ENCODE measurements at regions of chr18 and their contacts with region 1.

Region 1: DNA sequence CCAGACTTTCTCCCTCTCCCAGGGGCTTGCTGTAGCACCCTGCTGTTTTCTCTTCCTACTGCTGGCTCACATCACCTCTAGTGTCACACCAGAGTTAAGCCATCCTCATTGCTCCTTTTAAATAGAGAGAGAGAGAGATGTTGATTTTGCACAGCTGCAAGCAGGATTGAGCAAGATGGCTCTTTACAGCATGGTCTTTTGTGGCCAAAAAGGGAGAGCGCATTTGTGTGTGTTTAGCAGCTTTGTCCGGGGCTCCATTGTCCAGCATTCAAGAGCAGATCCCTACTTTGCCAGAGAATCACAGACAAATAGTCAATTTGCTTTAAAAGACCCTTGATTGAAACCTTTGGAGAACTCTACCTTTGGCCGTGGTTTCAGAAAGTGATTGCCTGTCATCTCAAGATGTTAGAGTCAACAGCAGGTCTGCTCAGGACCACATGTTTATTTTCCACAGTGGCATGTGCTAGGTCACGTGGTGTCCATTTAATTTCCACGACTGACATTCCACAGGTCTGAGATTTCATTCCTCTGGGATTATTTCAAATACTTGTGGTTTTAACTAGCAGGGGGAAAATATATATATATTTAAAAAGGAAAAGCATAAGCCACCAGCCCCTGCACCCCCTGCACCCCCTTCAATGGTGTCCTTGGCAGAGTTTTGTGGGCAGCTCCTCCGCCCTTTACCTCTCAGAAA is 359.9 kb upstream of the SLC14A2 start:
- DNase-seq: no peak

Region 2: GRCh38 chr18:45517181-45517741 is 261.9 kb after region 1 on chr18:
- intact Hi-C with region 1: loop called in 1 of 2 experiments (anchors 10 kb)
- DNase-seq: peak; percentile 94

Region 3: GRCh38 chr18:45631077-45631476 is 375.7 kb after region 1 on chr18:
- intact Hi-C with region 1: loop called in 1 of 2 experiments (anchors 5 kb)
- DNase-seq: no peak